ENCODE measurements at regions of chrX and their contacts with region 1.

Region 1: GRCh38 chrX:77910108-77910840 is at the start of gene ATP7A:
- DNase-seq: peak; percentile 94 to 97 (median 97)
- H3K4me3 ChIP-seq: peak within 1 kb of the TSS; percentile 31 to 93 (median 80)
- H3K27ac ChIP-seq: peak within 1 kb of the TSS; percentile 64 to 88
- H3K4me1 ChIP-seq: peaks cover 6 to 20% (median 8%) of the 10 kb centered on the region in 4 experiments
- H3K27me3 ChIP-seq: peaks cover 0 to 2% (median 0%) of the 10 kb centered on the region in 5 experiments

Region 2: GRCh38 chrX:77779695-77780094 is 130.6 kb before region 1 on chrX:
- CTCF ChIA-PET with region 1: no interaction called
- POLR2A ChIA-PET with region 1: no interaction called
- DNase-seq: no peak
- H3K4me3 ChIP-seq: no peak overlapping the region
- H3K27ac ChIP-seq: no peak overlapping the region
- H3K4me1 ChIP-seq: peaks cover 1 to 17% (median 4%) of the 10 kb centered on the region in 4 experiments
- H3K27me3 ChIP-seq: no peaks in the 10 kb centered on the region

Region 3: GRCh38 chrX:77899081-77899828 is 11.0 kb before region 1 on chrX and contains the start of gene COX7B:
- CTCF ChIA-PET with region 1: interaction called, 10 read pairs
- POLR2A ChIA-PET with region 1: interaction called, 11 read pairs
- DNase-seq: peak; percentile 95 to 97 (median 97)
- H3K4me3 ChIP-seq: peak within 1 kb of the TSS; percentile 26 to 97 (median 89)
- H3K27ac ChIP-seq: peak within 1 kb of the TSS; percentile 81 to 94
- H3K4me1 ChIP-seq: peaks cover 0 to 6% (median 3%) of the 10 kb centered on the region in 4 experiments
- H3K27me3 ChIP-seq: no peaks in the 10 kb centered on the region

Region 4: DNA sequence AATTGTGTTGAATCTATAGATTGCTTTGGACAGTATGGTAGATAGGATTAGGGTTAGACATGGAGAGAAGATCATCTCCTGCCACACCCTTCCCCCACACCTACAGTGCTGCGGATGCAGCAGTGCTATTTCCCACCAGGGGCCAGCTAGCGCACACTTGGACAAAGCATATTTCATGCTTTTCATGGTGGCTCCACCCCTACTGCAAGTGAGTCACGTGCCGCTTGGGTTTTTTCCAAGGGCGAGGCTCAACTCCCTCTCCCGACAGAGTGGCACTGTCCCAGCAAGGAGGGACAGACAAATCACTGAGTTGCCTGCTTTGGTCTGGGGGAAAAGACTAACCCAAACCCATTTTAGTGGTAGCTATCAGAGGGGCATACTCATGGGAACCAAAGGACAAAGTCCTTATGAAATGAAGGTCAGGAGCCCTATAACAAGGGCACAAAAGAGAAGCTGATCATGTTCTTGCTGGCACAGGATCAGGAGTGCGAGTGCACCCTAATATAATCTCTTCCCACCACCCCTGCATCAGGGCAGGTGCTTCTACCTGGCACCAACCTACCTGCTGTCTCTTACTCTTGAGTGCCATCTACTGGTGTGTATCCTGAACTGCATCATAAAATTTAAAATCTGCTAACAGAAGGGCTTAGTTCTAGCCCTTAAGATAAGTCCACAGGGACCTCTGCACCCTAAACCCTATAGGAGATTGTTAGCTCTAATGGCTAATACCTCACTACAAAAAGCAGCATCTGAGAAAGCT is 114.3 kb after region 1 on chrX:
- CTCF ChIA-PET with region 1: interaction called, 22 read pairs
- POLR2A ChIA-PET with region 1: no interaction called
- DNase-seq: peak; percentile 27 to 49 (median 47)
- H3K4me3 ChIP-seq: peak overlapping the region in 1 of 7 experiments; percentile 42
- H3K27ac ChIP-seq: no peak overlapping the region
- H3K4me1 ChIP-seq: no peaks in the 10 kb centered on the region
- H3K27me3 ChIP-seq: no peaks in the 10 kb centered on the region

Measured in common myeloid progenitor, CD34-positive (primary cell).